Cardiac septum (tissue), 1 donor: ENCODE measurements at regions of chr1 and their contacts with region 1.

Region 1: GRCh38 chr1:54397090-54397591 is 9.1 kb downstream of the SSBP3 start:
- DNase-seq: peak; percentile 89

Region 2: DNA sequence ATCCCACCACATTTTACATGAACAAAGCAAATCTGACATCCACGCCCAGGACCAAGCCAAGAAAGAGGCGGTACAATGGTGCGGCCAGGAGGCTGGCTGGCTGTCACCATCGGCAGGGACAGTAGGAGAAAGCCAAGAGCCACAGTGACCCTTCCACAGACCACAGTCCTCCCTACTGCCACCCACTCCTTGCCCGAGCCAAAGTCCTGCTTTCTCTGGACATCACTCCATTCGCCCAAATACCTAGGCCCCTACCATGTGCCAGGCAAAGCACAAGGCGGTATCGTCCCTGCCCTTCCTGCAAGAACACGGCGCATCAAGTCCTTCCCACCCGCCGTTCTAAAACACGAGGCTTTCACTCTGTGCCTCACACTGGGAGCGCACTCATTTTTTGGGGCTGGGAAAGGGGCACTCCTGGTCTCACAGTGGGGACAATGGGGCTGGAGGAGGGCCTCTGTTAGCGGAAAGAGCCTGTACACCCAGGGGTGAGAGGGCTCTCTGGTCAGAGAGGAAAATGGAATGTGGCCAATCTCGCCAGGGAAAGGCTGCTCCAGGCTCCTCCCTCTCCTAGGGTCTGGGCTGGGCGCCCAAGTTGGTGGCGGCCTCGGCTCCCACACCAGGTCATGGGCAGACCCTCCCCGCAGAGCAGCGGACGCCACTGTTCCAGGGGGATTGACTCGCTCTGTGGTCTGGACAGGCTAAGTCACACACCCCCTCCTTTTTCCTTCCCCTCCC is 17.4 kb before region 1 on chr1:
- intact Hi-C with region 1: loop called (anchors 2 kb)
- DNase-seq: no peak

Region 3: DNA sequence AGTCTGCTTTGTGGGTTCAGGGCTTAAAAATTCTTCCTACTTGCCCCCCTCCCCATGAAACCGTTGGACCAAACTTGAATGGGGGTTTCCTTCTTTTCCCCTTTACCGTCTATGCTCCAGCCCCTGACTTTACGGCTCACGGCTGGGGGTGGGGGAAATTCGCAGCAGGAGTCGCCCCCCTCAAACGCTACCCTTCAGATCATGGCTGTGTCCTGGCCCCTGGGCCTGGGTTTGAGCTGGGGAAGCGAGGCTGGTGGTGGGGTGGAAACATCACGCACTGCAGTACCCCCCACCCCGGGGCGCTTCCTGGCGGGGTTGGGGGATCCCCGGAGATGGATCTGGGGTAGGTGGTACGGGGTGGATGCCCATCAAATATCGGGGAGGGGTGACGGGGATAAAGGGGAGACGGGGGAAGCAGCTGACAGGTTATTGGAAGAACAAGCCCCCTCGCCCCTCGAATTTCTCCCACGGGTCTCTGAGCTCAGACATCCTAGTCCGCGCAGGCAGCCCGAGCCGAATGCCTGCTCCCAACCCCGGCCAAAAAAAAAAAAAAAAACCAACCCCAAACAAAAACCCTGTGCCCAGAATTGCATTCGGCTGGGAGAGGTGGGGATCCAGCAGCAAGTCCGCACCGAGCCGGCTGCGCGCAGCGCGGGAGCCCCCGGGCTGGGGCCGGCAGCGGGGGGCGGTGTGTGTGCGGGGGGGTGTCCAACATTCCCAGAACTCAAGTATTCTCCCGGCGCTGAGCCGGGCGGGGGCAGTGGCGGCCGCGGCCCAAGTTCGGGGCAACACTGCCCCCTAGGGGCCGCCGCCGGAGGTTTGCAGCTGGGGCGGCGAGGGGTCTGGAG is 91.9 kb after region 1 on chr1:
- intact Hi-C with region 1: no loop called
- DNase-seq: peak; percentile 90

Region 4: GRCh38 chr1:54591127-54591756 is 194.1 kb after region 1 on chr1:
- intact Hi-C with region 1: no loop called
- DNase-seq: no peak